ENCODE measurements at regions of chr1 and their contacts with region 1.

Region 1: DNA sequence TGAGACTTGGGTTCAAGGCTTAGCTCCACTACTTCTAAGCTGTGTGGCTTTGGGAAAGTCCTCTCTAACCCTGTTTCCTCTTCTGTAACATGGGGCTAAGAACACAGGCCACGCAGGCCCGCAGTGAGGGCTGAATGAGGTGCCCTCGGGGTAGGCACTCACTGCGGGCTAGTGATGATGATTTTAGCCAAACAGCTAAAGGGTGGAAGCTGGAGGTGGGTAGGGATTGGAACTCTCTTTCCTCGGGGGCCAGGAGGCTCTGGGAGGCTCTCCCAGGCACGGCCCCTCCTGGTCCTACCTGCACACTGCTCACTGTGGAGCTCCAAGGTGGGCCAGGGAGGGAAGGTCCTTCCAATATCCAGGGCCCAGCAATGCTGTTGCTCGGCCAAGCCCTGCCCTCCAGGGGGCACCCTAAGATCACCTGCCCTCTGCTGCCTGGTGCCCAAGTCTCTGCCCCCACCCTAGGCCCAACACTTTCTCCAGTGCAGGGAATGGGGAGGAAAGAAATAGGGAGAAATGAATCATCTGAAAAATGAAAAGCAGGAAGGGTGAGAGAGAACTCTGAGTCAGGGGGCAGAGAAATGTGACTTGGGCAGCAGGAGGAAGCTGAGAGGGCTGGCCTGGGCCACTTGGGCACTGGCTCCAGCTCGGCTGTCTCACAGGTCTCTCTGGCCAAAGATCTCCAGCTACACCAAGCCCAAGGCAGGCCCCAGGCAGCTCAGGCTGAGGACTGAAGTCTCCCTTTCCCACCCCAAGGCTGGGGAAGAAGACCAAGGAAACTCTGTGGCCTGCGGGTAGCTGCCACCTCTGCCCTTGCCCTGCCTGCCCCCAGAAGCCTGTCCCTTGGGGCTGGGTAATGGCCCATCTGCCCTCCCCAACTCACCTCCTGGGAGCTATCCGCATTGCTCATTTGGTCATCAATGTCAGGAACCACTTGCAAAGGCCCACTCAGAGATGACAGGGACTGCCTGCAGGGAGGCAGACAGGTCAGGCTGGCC is 19.3 kb upstream of the EVA1B start:
- DNase-seq: peak; percentile 70
- H3K4me3 Mint-ChIP-seq: no peak overlapping the region
- H3K27ac Mint-ChIP-seq: no peak overlapping the region
- H3K4me1 Mint-ChIP-seq: peaks cover 16% of the 10 kb centered on the region
- H3K27me3 Mint-ChIP-seq: no peaks in the 10 kb centered on the region

Region 2: GRCh38 chr1:36359911-36360550 is 17.3 kb after region 1 on chr1:
- CTCF ChIA-PET with region 1: interaction called, 14 read pairs
- POLR2A ChIA-PET with region 1: no interaction called
- intact Hi-C with region 1: no loop called
- DNase-seq: peak; percentile 57
- H3K4me3 Mint-ChIP-seq: no peak overlapping the region
- H3K27ac Mint-ChIP-seq: peak overlapping the region; percentile 84
- H3K4me1 Mint-ChIP-seq: peaks cover 21% of the 10 kb centered on the region
- H3K27me3 Mint-ChIP-seq: no peaks in the 10 kb centered on the region

Region 3: GRCh38 chr1:36411674-36412520 is 69.1 kb after region 1 on chr1:
- CTCF ChIA-PET with region 1: interaction called, 56 read pairs
- POLR2A ChIA-PET with region 1: interaction called, 3 read pairs
- intact Hi-C with region 1: no loop called
- DNase-seq: peak; percentile 81
- H3K4me3 Mint-ChIP-seq: peak overlapping the region; percentile 38
- H3K27ac Mint-ChIP-seq: peak overlapping the region; percentile 65
- H3K4me1 Mint-ChIP-seq: peaks cover 16% of the 10 kb centered on the region
- H3K27me3 Mint-ChIP-seq: no peaks in the 10 kb centered on the region